Left ventricle myocardium superior (tissue), 1 donor: ENCODE measurements at regions of chr19 and their contacts with region 1.

Region 1: GRCh38 chr19:16180611-16181010 is 4.6 kb upstream of the FAM32A start:
- DNase-seq: no peak
- ATAC-seq: no peak

Region 2: DNA sequence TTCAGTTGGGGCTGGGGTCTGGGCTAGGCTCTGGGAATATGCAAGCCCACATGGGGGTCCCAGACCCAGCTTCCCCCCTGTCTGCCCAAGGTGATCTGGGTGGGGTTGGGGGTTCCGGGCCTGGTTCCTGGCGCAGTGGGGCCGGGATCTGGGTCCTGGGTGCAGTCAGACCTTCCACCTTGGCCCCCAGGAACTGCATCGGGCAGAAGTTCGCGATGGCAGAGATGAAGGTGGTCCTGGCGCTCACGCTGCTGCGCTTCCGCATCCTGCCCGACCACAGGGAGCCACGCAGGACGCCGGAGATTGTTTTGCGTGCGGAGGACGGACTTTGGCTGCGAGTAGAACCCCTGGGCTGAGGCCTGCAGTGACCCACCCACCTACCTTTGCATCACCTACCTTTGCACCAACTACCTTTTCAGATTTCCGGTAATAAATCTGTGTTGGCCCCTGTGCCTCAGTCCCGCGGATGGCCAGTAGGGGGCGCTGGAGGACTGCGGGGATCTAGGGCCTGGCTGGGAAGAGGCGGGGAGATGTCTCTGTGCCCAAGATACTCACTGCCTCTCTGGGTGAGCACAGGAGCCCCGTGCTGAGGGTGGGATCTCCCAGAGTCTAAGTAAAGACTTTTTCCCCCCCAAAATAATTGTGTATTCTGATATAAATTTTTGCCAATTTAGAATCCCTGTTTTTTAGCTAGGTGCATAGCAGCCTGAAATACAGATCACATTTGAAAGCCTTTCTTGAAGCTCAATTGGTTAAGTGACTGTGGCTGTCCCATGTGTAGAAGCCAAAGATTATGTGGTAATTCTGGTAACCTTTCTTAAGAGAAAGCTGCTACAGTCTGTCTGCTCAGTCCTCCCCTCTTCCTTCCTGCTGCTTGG is 551.4 kb before region 1 on chr19:
- intact Hi-C with region 1: loop called (anchors 10 kb)
- DNase-seq: peak; percentile 89
- ATAC-seq: peak; percentile 89

Region 3: DNA sequence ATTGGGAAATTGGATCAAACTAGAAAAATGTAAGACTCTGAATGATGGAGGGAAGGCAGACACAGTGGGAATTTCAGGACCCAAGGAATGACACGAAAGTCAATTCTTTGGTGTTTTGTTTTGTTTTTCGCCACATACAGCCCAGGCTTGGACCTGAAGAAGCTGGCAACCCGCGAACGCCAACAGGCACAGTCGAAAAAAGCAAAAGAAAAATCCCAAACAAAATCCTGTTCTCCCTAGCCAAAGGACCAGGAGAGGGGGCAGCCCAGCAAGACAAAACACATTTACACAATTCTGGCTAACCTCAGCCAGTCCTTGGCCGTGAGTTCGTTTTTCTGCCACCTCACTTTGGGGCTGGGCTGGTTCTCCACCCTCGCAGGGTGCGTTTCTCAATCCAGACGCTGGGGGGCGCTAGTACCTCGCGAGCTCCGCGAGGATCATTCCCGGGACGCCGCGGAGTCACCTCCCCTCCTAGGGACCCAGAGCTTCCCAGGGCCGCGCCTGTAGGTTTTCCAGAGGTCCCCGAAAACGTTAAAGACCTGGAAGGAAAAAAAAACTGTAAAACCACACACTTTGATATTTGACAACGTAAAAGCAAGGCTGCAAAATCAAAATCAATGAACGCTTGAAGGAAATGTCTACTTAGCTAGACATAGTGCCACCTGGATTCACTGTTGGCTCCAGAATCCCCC is 139.2 kb before region 1 on chr19:
- intact Hi-C with region 1: loop called (anchors 5 kb)
- DNase-seq: peak; percentile 87
- ATAC-seq: peak; percentile 97